ENCODE measurements at regions of chr4 and their contacts with region 1.

Region 1: DNA sequence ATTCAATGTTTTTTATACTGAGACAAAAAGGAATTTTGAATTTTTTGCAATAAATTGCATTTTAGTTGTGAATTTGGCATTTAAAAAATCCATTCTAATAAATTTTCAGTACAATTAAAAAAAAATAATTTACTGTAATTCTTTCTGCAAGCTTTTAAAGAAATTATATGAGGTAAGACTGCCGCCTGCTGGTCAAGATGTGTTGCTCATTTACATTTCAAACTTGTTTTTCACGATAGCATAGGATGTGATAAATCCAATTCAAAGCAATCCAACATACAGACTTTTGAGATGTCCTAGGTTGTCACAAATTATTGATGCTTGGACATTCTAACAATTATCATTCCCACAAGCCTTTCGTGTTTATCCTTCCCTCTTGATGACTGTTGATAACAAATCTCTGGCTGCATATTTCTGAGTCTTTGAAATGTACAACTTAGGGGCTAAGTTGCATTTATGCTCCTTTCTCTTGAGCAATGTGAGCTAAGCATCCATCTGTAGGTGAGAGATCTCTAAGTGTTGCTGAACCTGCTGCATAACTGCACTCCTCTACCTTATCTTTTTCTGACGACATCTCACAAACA is 21.7 kb upstream of the MFAP3L start:
- DNase-seq: peak; percentile 51
- ATAC-seq: no peak

Region 2: GRCh38 chr4:169810325-169811323 is 237.2 kb before region 1 on chr4:
- intact Hi-C with region 1: loop called (anchors 2 kb)
- DNase-seq: no peak
- ATAC-seq: peak; percentile 64

Region 3: GRCh38 chr4:170138580-170139194 is 90.8 kb after region 1 on chr4:
- intact Hi-C with region 1: no loop called
- DNase-seq: peak; percentile 69
- ATAC-seq: peak; percentile 80